Activated naive CD8-positive, alpha-beta T cell treated with anti-CD3 and anti-CD28 coated beads, Interleukin-2, amount 10 ng/mL, durations not matched to agents 7 days and 5 days (primary cell): ENCODE measurements at regions of chr6 and their contacts with region 1.

Region 1: GRCh38 chr6:11224252-11224965 is 8.1 kb downstream of the NEDD9 start:
- DNase-seq: peak; percentile 58
- ATAC-seq: peak; percentile 85
- H3K4me3 Mint-ChIP-seq: peak overlapping the region; percentile 74
- H3K27ac Mint-ChIP-seq: peak overlapping the region; percentile 97
- H3K4me1 Mint-ChIP-seq: peaks cover 70% of the 10 kb centered on the region
- H3K27me3 Mint-ChIP-seq: no peaks in the 10 kb centered on the region

Region 2: DNA sequence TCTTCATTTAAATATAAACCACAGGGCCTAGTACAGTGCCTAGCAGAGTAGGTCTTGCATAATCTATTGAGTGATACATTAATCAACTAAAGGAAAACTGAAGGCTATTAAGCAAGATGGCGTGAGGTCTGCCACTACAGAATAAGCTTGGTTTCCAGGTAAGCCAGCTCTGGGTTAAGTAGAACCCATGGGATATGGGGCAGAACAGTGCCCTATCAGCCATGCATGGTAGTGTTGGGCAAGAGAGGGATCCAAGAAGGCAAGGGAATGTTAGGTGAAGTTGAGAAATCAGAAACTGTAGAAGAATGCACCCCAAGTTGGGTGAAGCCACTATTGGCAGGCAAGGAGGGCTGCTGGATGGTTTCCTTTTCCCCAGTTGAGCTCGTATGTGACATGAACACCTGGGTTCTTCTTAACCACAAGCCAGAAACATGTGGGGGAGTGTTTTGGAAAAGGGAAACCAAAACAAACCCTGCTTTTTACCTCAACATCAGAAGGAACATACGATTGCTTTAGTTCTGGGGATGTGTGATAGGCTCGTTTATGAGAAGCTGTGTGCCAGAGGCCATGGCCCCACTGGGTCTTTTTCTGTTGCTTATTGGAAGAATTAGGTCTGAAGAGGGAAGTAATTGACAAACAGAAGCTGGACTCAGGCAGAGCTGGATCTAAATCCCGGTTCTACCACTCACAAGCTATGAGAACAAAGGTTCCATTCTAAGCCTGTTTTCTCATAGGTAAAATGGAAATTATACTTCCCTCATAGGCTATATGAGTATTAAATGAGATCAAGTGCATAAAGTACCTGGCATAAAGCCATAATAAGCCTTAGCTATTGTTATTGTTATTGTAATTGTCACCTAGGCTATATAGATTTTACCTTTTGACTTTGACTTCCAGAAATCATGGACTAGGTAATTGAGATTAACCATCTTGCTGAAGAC is 25.5 kb before region 1 on chr6:
- POLR2A ChIA-PET with region 1: interaction called, 59 read pairs
- DNase-seq: peak; percentile 51
- ATAC-seq: peak; percentile 76
- H3K4me3 Mint-ChIP-seq: peak overlapping the region; percentile 78
- H3K27ac Mint-ChIP-seq: peak overlapping the region; percentile 96
- H3K4me1 Mint-ChIP-seq: peaks cover 66% of the 10 kb centered on the region
- H3K27me3 Mint-ChIP-seq: no peaks in the 10 kb centered on the region

Region 3: DNA sequence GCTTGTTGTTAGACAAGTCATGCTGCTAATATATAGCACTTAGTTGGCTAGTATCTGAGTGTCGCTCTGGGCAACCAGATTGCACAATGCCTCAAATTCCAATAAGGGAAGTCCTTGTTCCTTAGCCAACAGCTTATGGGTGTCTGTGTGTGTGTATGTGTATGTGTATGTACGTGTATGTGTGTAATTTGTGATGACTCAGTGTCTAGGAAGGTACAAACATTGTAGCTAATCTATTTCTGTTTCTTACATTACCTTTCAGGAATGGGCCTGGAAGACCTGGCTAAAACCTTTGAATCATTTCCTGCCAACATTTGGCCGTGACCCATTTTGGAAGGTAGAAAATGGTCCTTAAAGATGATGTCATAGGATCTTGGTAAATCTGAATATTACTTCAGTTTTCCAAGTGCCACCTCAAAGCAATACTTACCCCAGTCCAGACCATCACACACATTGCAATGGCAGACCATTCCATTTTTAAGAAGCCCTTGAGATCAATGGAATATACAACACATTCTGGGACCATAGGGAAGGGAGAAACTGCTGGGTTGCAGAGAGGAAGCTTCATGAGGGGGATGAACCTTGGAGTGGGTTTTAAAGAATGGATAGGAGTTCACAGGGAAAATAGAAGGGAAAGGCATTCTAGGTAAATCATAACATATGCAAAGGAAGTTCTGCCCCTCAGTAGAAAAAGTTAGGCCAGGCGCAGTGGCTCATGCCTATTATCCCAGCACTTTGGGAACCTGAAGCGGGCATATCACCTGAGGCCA is 17.0 kb before region 1 on chr6:
- POLR2A ChIA-PET with region 1: interaction called, 59 read pairs
- DNase-seq: no peak
- ATAC-seq: no peak
- H3K4me3 Mint-ChIP-seq: no peak overlapping the region
- H3K27ac Mint-ChIP-seq: peak overlapping the region; percentile 78
- H3K4me1 Mint-ChIP-seq: peaks cover 78% of the 10 kb centered on the region
- H3K27me3 Mint-ChIP-seq: no peaks in the 10 kb centered on the region

Region 4: DNA sequence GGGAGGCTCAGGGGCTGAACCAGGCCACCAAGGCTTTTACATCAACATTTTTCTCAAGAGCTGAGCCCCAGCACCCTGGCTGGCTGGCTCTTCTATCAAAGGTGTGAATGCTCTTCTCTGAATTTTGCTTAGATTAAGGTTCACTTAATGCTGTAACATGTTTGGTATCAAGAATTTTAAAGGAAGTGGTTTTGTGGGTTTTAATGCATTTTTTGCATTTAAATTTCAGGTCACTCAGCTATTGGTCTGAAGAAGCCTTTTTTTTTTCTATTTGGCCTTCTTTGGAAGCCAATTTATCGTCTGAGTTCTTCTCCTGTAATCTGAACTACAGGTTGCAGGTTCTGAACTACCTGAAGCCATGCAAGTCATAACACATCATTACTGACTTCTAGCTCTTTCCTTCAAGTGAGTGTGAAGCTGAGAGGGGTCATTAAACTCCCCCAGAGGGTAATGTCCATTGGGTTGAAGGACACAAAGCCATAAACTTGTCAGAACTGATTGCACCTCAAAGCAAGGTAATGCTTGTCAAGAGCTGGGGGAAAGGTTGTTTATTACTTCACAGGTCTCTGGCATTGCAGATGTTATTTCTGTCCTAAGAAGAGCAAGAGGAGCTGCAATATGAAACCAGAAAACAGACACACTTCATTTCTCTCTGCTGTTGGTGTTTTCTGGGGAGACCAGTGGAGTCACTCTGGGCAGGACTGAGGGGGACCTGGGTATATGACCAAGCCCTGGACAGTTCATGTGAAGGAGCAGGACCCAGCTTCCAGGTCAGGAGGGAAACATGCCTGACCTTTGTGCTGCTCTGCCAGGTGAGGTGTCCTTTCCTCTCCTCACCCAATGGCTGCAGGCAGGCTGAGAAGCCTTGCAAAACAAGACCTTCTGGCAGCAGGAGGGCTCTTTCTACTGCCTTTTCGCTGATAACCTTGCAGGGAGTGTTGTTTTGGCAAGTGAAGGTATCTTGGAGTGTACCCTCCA is 34.1 kb after region 1 on chr6:
- POLR2A ChIA-PET with region 1: interaction called, 25 read pairs
- DNase-seq: peak; percentile 48
- ATAC-seq: peak; percentile 97
- H3K4me3 Mint-ChIP-seq: peak overlapping the region; percentile 63
- H3K27ac Mint-ChIP-seq: peak overlapping the region; percentile 89
- H3K4me1 Mint-ChIP-seq: peaks cover 54% of the 10 kb centered on the region
- H3K27me3 Mint-ChIP-seq: no peaks in the 10 kb centered on the region

Region 5: DNA sequence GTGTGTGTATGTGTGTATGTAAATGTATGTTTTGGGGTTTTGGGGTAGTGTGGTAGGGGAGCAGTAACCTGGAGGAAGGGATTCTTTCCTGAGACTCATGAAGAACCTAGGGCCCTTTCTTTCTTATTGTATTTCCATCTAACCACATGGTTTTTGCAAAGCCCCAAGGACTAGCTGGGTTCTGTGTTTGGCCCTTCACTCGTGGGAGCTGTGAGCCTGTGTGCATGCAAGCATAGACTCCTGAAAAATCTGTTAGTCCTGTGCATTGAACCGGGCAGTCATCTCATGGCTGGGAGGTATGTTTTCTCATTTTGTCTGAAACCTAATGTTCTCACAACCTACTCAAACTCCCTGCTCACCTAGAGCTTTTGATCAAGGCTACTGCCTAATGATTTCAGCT is 1711.2 kb after region 1 on chr6:
- POLR2A ChIA-PET with region 1: no interaction called
- DNase-seq: no peak
- ATAC-seq: no peak
- H3K4me3 Mint-ChIP-seq: no peak overlapping the region
- H3K27ac Mint-ChIP-seq: no peak overlapping the region
- H3K4me1 Mint-ChIP-seq: no peaks in the 10 kb centered on the region
- H3K27me3 Mint-ChIP-seq: peaks cover 10% of the 10 kb centered on the region